Posterior vena cava (tissue), 2 donors: ENCODE measurements at regions of chr13 and their contacts with region 1.

Region 1: GRCh38 chr13:50396001-50396400 is 380.8 kb downstream of the KCNRG start:
- DNase-seq: no peak

Region 2: DNA sequence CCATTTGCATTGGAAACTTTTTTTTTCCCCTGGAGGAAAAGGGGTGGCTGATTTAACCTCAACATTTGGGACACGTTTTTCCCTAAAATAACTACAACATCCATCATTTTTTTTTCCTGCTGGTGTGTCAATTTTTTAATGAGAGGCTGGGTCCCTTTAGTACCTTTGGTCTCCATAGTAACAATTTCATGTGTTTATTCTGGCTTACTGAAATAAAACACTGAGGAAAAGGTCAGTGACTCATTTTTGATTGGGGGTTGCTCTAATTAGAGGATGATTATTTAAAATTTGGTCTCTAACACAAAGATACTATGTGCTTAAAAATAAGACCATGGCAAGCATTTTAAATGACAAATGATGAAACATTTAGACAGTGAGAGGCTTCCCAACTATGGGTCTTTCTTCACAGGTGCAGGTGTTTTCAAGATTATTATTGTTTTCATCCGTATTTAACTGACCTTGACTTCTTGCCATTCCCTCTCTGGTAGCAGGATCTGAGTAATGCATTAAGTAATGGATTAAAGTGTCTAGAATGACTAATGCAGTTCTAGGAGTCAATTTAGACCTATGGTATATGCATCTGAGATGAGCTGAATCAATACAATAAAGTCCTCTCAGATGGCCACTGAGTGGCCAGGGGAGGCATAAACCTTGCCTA is 25.6 kb after region 1 on chr13:
- intact Hi-C with region 1: loop called in 1 of 2 experiments (anchors 1 kb)
- DNase-seq: no peak

Region 3: DNA sequence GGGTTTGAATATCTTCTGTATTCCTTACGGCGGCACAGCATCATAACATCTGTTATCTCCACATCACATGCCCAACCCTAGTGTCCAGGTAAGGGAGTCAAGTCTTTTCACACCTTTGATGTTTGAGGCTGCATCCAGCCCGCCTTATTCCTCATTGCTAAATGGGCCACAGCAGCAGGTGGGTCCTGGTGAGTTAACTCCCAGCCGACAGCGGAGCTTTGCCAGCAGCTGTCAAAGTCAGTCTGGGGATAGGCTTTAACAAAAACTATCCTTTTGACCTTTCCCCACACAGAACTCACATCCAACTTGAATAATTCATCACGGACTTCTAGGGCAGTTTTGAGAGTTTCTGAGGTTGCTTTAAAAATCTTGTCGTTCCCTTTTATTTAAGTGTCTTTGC is 212.4 kb after region 1 on chr13:
- intact Hi-C with region 1: no loop called
- DNase-seq: no peak